H1 (cell line): ENCODE measurements at regions of chr1 and their contacts with region 1.

Region 1: DNA sequence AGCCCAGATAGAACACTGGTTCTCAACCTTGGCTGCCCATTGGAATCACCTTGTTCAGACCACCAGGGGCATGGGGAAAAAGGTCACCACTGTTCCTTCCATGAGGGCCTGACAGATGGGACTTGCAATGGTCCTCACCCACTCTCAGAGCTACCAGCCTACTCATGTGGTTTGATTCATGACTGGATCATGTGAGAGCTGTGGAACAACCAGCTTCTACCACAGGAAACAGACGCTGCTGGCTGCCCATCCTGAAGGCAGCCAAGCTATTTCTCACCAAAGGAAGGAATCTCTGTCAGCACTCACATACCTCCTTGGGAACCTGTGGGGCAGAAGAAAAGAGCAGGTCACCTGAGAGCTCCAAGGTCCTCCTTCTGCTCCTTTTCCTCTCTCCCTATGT is 53.6 kb downstream of the CAPN8 start:
- DNase-seq: no peak
- H3K4me3 ChIP-seq: no peak overlapping the region
- H3K27ac ChIP-seq: no peak overlapping the region
- H3K4me1 ChIP-seq: no peaks in the 10 kb centered on the region
- H3K27me3 ChIP-seq: no peaks in the 10 kb centered on the region; a peak in 1 of 7 replicates
- CTCF ChIP-seq: no peak
- EP300 ChIP-seq: no peak
- POLR2A ChIP-seq: no peak
- RAD21 ChIP-seq: no peak

Region 2: DNA sequence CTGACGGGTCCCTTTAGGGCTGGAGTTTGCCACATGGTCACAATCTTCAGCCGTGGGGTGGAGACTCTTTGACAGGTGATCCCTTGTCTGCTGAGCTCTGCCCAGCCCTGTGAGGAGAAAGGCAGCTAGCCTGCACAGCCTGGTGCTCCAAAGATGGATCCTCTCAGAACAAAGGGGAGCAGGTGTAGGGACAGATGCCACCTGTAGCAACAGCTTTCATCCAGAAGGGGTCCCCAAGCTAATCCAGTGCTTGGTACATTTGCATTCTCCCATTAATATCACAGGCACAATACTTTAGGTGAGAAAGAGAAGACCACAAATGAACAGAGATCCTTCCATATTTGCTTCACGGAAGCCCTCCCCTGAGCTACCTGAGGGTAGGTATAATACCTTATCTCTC is 125.6 kb before region 1 on chr1:
- CTCF ChIA-PET with region 1: no interaction called
- POLR2A ChIA-PET with region 1: no interaction called
- DNase-seq: no peak
- H3K4me3 ChIP-seq: no peak overlapping the region
- H3K27ac ChIP-seq: no peak overlapping the region
- H3K4me1 ChIP-seq: peaks cover 0 to 7% (median 1%) of the 10 kb centered on the region in 4 experiments; a peak in 3 of 7 replicates
- H3K27me3 ChIP-seq: peaks cover 0 to 2% (median 0%) of the 10 kb centered on the region in 4 experiments; a peak in 1 of 7 replicates
- CTCF ChIP-seq: peak in 1 of 3 experiments; percentile 42; a peak in 2 of 4 replicates
- EP300 ChIP-seq: no peak
- POLR2A ChIP-seq: no peak
- RAD21 ChIP-seq: no peak; a peak in 1 of 4 replicates

Region 3: GRCh38 chr1:223549740-223550139 is 62.2 kb before region 1 on chr1:
- CTCF ChIA-PET with region 1: interaction called, 31 read pairs
- POLR2A ChIA-PET with region 1: no interaction called
- DNase-seq: no peak
- H3K4me3 ChIP-seq: no peak overlapping the region
- H3K27ac ChIP-seq: no peak overlapping the region
- H3K4me1 ChIP-seq: no peaks in the 10 kb centered on the region
- H3K27me3 ChIP-seq: no peaks in the 10 kb centered on the region
- CTCF ChIP-seq: peak in 1 of 3 experiments; percentile 5; a peak in 1 of 4 replicates
- EP300 ChIP-seq: no peak
- POLR2A ChIP-seq: no peak
- RAD21 ChIP-seq: no peak

Region 4: DNA sequence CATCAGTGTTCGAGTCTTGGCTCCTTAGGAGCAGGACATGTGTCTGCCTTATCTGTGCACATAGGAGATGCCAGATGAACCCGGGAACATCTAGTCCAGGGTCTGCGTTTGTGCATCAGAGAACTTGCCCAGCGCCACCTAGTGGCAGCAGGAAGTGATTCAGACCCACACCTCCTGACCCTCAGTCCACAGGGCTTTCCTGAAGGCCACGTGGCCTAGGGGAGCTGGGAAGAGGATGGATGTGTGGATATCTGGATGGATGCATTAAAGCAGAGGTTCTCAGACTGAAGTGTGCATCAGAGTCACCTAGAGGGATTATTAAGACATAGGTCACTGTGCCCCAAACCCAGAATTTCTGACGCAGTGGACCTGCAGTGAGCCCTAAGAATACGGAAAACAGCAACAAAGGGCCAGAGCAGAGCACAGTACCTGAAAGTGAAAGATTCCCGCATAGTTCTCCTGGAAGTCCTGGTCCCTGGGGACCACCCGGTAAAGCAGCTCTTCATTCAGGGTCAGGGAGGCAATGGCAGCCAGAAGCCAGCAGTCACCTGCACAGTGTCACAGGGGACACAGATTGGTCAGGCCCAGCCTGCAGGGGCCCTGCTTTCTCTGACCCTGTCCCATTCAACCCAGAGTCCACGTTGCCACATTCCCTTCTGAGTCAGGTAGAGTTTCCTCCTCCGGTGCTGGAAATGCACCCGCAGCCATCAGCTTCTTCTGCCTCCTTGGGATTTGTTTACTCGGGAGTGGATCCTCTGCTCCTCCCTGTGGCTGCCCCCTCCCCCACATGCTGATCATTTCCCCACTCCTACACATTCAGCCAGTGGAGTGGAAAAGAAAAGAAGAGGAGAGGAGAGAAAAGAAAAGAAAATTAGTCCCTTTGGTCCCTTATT is 16.5 kb after region 1 on chr1:
- CTCF ChIA-PET with region 1: interaction called, 38 read pairs
- POLR2A ChIA-PET with region 1: no interaction called
- DNase-seq: peak; percentile 10 to 76
- H3K4me3 ChIP-seq: no peak overlapping the region
- H3K27ac ChIP-seq: no peak overlapping the region
- H3K4me1 ChIP-seq: 0 out of 7 replicates have a peak, but pooled peaks cover 0 to 4% (median 0%) of the 10 kb centered on the region in 4 experiments
- H3K27me3 ChIP-seq: no peaks in the 10 kb centered on the region
- CTCF ChIP-seq: peak; percentile 71 to 91 (median 87)
- EP300 ChIP-seq: no peak
- POLR2A ChIP-seq: no peak
- RAD21 ChIP-seq: peak; percentile 51 to 62